ENCODE measurements at regions of chr12 and their contacts with region 1.

Region 1: DNA sequence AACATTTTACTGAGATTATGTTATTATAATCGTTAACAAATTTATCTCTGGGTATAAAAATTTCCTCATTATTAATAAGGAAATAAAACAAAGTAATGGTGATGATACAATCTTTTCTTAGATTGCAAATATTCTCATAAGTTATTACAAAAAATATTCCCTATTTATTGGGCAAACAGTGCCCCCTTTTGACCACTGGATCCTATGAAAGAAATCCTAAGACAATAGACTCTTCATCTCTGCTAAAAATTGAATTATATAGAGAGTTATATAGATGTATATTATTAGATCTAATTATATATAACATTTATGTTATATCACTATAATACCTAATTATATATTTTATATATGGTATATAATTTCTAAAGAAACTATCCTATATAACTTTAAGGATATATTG is 94.2 kb upstream of the FGD4 start:
- DNase-seq: peak; percentile 36
- H3K4me3 ChIP-seq: no peak overlapping the region
- H3K27ac ChIP-seq: no peak overlapping the region
- H3K4me1 ChIP-seq: peaks cover 4% of the 10 kb centered on the region in 2 experiments; a peak in 3 of 4 replicates
- H3K27me3 ChIP-seq: no peaks in the 10 kb centered on the region
- CTCF ChIP-seq: peak; percentile 72
- EP300 ChIP-seq: no peak
- RAD21 ChIP-seq: peak; percentile 78

Region 2: DNA sequence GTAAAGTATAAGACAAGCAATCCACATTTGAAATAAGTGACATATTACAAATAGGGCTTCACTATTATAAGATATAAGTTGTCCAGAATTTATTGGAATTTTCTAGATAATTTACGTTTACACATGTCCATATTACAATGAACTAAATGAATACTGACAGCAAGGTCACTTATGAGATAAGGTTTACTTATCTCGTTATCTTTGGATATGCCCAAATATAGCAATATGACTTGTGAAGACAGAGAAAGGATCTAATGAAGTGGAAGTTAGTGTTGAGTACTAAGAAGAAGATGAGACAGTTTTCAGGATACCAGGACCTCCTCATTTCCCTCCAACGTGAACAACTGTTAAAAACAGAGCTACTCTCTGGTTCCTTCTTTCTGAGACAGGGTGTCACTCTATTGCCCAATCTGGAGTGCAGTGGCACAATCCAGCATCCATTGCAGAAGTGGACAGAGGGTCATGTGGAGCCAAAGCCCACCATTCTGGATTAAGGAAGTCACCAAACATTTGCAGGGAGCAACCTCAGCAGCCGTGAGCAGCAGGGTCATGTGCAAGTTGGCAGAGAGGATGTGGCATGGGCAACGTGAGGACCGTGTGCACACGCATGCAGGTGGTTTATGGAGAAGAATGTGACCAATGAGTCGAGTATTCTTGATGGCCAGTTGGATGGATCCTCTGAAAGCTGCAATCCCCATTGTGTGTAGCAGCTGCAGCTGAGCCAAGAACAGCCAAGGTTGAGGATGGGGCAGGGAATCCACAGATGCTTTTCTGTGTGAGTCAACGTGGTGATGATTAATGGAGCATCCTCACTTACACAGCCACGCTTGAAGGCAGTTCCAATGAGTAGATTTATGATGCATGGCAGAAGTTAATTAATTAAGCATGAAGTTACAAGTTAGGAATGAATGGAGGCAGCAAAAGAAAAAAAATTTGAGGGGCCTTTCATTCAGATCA is 87.5 kb before region 1 on chr12:
- CTCF ChIA-PET with region 1: no interaction called
- POLR2A ChIA-PET with region 1: no interaction called
- DNase-seq: no peak
- H3K4me3 ChIP-seq: no peak overlapping the region
- H3K27ac ChIP-seq: peak overlapping the region; percentile 25 to 42; a peak in 2 of 4 replicates
- H3K4me1 ChIP-seq: peaks cover 4 to 11% of the 10 kb centered on the region in 2 experiments; a peak in 3 of 4 replicates
- H3K27me3 ChIP-seq: no peaks in the 10 kb centered on the region
- CTCF ChIP-seq: no peak
- EP300 ChIP-seq: peak in 1 of 2 experiments; percentile 66; a peak in 1 of 4 replicates
- RAD21 ChIP-seq: no peak

Region 3: GRCh38 chr12:32273712-32274111 is 31.5 kb before region 1 on chr12:
- CTCF ChIA-PET with region 1: no interaction called
- POLR2A ChIA-PET with region 1: no interaction called
- DNase-seq: no peak
- H3K4me3 ChIP-seq: no peak overlapping the region
- H3K27ac ChIP-seq: no peak overlapping the region; a peak in 1 of 4 replicates
- H3K4me1 ChIP-seq: peaks cover 19 to 29% of the 10 kb centered on the region in 2 experiments
- H3K27me3 ChIP-seq: no peaks in the 10 kb centered on the region
- CTCF ChIP-seq: no peak
- EP300 ChIP-seq: no peak
- RAD21 ChIP-seq: no peak

Region 4: GRCh38 chr12:32290411-32290810 is 14.8 kb before region 1 on chr12:
- CTCF ChIA-PET with region 1: interaction called, 10 read pairs
- POLR2A ChIA-PET with region 1: no interaction called
- DNase-seq: no peak
- H3K4me3 ChIP-seq: no peak overlapping the region
- H3K27ac ChIP-seq: no peak overlapping the region
- H3K4me1 ChIP-seq: no peaks in the 10 kb centered on the region; a peak in 1 of 4 replicates
- H3K27me3 ChIP-seq: no peaks in the 10 kb centered on the region
- CTCF ChIP-seq: no peak
- EP300 ChIP-seq: no peak
- RAD21 ChIP-seq: no peak

Measured in SK-N-SH (cell line).